Caco-2 (cell line): ENCODE measurements at regions of chr3 and their contacts with region 1.

Region 1: DNA sequence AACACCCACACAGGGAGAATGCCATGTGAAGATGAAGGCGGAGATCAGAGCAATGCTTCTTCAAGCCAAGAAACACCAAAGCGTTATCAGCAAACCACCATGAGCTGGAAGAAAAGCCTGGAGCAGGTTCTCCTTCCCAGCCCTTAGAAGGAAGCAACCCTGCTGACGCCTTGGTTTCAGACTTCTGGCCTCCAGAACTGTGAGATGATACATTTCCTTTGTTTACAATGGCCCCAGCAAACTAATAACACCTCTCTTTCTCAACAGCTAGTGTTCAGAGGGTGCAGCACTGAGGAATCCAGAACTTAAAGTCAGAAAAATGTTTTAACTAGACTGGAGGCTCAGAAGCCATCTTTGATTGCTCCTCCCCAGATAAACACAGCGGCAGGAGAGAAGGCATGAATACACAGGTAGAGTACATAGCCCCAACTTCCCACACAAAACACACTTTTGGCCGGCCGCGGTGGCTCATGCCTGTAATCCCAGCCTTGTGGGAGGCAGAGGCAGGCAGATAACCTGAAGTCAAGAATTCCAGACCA is 132.4 kb upstream of the LPP start:
- DNase-seq: peak; percentile 50 to 67
- H3K4me3 ChIP-seq: no peak overlapping the region
- H3K4me3 Mint-ChIP-seq: no peak overlapping the region
- H3K27ac Mint-ChIP-seq: peak overlapping the region; percentile 63
- H3K4me1 ChIP-seq: peaks cover 11% of the 10 kb centered on the region
- H3K4me1 Mint-ChIP-seq: no peaks in the 10 kb centered on the region
- H3K27me3 ChIP-seq: no peaks in the 10 kb centered on the region
- H3K27me3 Mint-ChIP-seq: no peaks in the 10 kb centered on the region
- CTCF ChIP-seq: no peak

Region 2: DNA sequence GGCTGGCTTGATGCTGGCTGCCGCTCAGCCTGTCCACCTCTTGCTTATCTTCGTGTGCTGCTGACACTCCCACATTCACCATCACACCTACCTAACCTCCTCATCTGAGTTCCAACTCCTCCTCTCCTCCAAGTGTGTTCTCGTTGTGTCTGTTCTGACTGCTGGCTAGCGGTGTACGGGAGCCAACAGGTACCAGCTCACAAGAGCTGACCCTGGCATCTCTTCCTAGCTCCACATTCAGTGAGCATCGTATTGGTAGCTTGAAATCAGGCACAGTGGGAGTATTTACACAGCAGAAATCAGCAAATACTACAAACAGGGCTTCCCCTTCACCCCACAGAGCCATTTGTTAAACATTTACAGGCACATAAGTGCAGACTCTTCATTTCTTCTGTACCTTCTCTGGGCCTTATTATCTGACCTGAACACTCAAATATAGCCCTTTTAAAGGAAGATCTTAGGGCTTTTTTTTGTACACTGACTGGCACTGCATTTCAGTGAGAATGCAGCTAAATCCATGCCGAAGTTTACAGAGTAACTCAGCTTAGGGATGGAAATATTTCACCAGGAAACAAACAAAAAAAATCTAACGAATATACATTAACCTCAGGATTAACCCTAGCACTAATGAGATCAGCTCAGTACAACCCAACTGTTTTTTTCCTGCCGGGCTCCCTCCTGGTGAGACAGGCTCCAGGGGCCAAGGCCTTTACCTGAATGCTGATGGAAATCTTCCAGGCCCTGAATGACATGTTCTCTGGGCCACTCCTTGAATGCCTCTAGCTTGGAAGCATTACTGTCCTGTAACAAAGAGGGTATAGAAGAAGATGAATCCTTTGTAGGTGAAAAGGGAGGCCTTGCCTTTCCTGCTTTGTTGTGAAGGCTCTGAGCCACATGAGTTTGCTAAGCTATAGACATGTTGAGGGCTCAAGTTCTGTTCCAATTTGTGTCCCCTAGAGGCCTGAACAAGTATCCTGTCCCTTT is 18.1 kb before region 1 on chr3:
- CTCF ChIA-PET with region 1: no interaction called
- POLR2A ChIA-PET with region 1: no interaction called
- intact Hi-C with region 1: loop called (anchors 2 kb)
- DNase-seq: peak; percentile 58 to 60
- H3K4me3 ChIP-seq: peak overlapping the region; percentile 24
- H3K4me3 Mint-ChIP-seq: peak overlapping the region; percentile 63
- H3K27ac Mint-ChIP-seq: peak overlapping the region; percentile 72
- H3K4me1 ChIP-seq: peaks cover 34% of the 10 kb centered on the region
- H3K4me1 Mint-ChIP-seq: peaks cover 41% of the 10 kb centered on the region
- H3K27me3 ChIP-seq: no peaks in the 10 kb centered on the region
- H3K27me3 Mint-ChIP-seq: no peaks in the 10 kb centered on the region
- CTCF ChIP-seq: no peak